Panc1 (cell line): ENCODE measurements at regions of chr14 and their contacts with region 1.

Region 1: DNA sequence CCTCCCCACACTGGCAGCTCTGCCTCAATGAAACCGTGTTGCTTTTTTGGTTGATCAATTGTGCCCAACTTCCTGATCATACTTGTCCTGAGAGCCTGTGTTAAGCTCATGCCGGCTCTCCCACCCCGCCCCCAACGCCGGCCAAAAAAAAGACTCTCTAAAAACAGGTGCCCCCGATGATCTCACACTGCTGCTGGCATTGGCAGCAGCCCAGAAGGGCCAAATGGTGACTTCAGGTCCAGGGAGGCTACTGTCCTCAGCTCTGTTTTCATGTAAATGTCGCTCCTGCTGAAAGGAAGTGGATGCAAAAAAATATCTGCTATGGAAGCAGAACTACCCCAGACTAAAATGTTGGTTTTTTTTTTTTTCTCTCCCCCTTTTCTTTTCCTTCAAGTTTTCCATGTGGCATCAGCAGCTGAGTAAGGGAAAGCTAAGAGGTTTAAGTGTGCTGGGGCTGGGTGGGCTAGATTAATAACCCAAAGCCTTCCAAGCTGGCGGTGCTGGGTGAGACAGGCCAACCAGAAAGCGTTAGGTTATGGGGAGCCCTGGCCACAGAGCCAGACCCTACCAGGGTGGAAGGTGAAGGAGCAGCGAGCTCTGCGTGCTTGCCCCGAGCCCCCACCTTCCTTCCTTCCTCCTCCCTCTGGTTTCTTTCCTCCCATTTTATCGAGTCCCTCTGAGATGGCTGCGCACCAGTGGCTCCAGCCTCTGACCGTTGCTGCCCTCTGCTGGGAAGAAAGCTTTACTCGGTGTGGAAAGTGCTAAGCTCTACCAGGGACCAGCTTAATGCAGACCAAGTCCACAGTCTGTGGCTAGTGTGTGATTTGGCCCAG is 396.1 kb downstream of the NRXN3 start:
- DNase-seq: peak; percentile 38
- ATAC-seq: peak; percentile 93
- H3K4me3 ChIP-seq: no peak overlapping the region
- H3K27ac ChIP-seq: no peak overlapping the region
- H3K4me1 ChIP-seq: no peaks in the 10 kb centered on the region
- H3K27me3 ChIP-seq: no peaks in the 10 kb centered on the region
- CTCF ChIP-seq: peak; percentile 79

Region 2: GRCh38 chr14:78022059-78022458 is 544.2 kb before region 1 on chr14:
- CTCF ChIA-PET with region 1: no interaction called
- POLR2A ChIA-PET with region 1: no interaction called
- in situ Hi-C with region 1: no loop called
- intact Hi-C with region 1: loop called (anchors 5 kb)
- DNase-seq: peak; percentile 28
- ATAC-seq: peak; percentile 88
- H3K4me3 ChIP-seq: no peak overlapping the region
- H3K27ac ChIP-seq: no peak overlapping the region
- H3K4me1 ChIP-seq: no peaks in the 10 kb centered on the region
- H3K27me3 ChIP-seq: peaks cover 2% of the 10 kb centered on the region; the same call in 1 of the 2 replicates
- CTCF ChIP-seq: peak; percentile 76

Region 3: GRCh38 chr14:78448164-78449094 is 117.8 kb before region 1 on chr14:
- CTCF ChIA-PET with region 1: no interaction called
- POLR2A ChIA-PET with region 1: no interaction called
- in situ Hi-C with region 1: no loop called
- intact Hi-C with region 1: loop called (anchors 5 kb)
- DNase-seq: peak; percentile 22
- ATAC-seq: no peak
- H3K4me3 ChIP-seq: no peak overlapping the region
- H3K27ac ChIP-seq: no peak overlapping the region
- H3K4me1 ChIP-seq: no peaks in the 10 kb centered on the region
- H3K27me3 ChIP-seq: no peaks in the 10 kb centered on the region; the same call in 1 of the 2 replicates
- CTCF ChIP-seq: peak; percentile 73

Region 4: GRCh38 chr14:78725086-78725485 is 158.8 kb after region 1 on chr14:
- CTCF ChIA-PET with region 1: no interaction called
- POLR2A ChIA-PET with region 1: no interaction called
- in situ Hi-C with region 1: no loop called
- intact Hi-C with region 1: no loop called
- DNase-seq: no peak
- ATAC-seq: no peak
- H3K4me3 ChIP-seq: no peak overlapping the region
- H3K27ac ChIP-seq: no peak overlapping the region
- H3K4me1 ChIP-seq: no peaks in the 10 kb centered on the region
- H3K27me3 ChIP-seq: no peaks in the 10 kb centered on the region
- CTCF ChIP-seq: no peak